Activated naive CD4-positive, alpha-beta T cell treated with anti-CD3 and anti-CD28 coated beads for 36 hours (primary cell): ENCODE measurements at regions of chr17 and their contacts with region 1.

Region 1: DNA sequence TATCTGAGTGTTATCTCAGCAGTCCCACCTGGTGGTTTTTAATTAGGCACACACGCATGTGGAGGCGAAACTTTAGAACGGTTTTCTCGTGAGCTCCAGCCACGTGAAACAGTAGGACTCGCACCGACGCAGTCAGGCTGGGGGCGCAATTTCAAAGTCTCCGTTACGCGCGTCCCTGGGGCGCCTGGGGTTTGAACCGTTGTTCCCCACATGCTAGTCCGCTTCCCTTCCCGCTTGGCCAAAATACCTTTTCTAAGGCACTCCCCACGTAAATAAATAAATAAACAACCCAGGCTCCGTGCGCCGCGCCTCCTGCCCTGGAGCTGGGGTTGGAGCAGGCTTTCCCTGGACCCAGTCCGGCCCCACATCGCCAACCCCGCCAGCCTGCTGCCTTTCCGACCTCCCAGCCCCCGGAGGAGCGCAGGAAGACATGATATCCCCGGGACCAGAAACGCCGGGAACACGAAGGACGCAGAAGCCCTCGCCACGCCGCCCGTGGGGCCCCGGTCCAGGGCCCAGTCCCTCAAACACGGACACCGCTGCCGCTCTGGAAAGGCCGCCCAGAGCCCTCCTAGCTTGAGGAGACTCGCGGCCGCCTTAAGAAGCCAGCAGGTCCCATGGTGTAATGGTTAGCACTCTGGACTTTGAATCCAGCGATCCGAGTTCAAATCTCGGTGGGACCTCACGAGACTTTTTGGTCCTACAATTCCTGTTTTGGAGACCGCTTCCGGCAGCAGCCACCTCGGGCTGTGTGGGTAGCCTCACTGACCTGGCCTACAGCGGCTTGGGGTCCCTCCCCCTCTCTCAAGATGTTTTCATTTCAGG is 18.2 kb downstream of the GNGT2 start:
- DNase-seq: peak; percentile 95
- H3K4me3 Mint-ChIP-seq: peak overlapping the region; percentile 90
- H3K27ac Mint-ChIP-seq: peak overlapping the region; percentile 98
- H3K4me1 Mint-ChIP-seq: peaks cover 20% of the 10 kb centered on the region
- H3K27me3 Mint-ChIP-seq: no peaks in the 10 kb centered on the region

Region 2: GRCh38 chr17:48429638-48430586 is 762.2 kb before region 1 on chr17 and contains the start of gene SKAP1:
- CTCF ChIA-PET with region 1: no interaction called
- intact Hi-C with region 1: loop called (anchors 10 kb)
- DNase-seq: peak; percentile 60
- H3K4me3 Mint-ChIP-seq: peak within 1 kb of the TSS; percentile 95
- H3K27ac Mint-ChIP-seq: peak within 1 kb of the TSS; percentile 96
- H3K4me1 Mint-ChIP-seq: peaks cover 65% of the 10 kb centered on the region
- H3K27me3 Mint-ChIP-seq: no peaks in the 10 kb centered on the region
- total RNA-seq, gene SKAP1: 60.3 to 60.5 TPM

Region 3: DNA sequence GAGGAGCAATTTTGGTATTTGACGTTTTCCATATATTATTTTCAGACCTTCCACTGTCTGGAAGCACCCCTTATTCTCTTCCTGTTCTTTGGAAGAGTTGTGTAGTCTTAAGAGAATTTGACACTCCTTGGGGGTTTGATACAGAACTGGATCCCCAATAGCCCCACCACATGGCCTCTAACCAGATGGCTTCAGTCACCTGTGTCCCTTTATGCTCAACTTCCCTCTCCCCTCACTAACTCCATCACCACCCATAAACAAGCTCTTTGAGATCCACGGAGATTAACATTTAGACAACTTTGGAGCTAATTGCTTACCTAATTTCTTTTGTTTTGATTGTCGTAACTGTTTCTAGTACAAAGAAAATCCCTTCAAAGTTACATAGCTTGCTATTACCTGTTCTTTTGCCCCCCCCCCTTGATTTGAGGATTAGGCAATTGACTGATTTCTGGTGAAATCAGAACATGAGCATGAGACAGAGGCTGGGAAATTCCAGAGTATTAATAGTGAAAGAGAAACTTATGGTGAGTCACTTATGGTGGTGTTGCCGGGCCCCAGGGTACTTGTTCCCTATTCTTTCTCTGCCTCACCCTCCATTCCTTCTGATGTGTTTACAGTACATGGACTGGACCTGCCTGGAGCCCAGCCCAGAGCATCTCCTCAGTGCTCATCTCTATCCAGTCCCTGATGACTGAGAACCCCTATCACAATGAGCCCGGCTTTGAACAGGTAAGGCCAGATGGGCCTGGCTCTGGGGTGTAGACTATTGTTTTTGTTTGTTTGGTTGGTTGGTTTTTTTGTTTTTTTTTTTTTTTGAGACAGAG is 276.5 kb before region 1 on chr17:
- CTCF ChIA-PET with region 1: no interaction called
- intact Hi-C with region 1: loop called (anchors 5 kb)
- DNase-seq: peak; percentile 80
- H3K4me3 Mint-ChIP-seq: peak overlapping the region; percentile 62
- H3K27ac Mint-ChIP-seq: peak overlapping the region; percentile 92
- H3K4me1 Mint-ChIP-seq: peaks cover 60% of the 10 kb centered on the region
- H3K27me3 Mint-ChIP-seq: no peaks in the 10 kb centered on the region

Region 4: GRCh38 chr17:49217651-49218413 is 25.7 kb after region 1 on chr17:
- CTCF ChIA-PET with region 1: interaction called, 14 read pairs
- intact Hi-C with region 1: loop called (anchors 2 kb)
- DNase-seq: peak; percentile 72
- H3K4me3 Mint-ChIP-seq: peak overlapping the region; percentile 33
- H3K27ac Mint-ChIP-seq: peak overlapping the region; percentile 66
- H3K4me1 Mint-ChIP-seq: peaks cover 63% of the 10 kb centered on the region
- H3K27me3 Mint-ChIP-seq: no peaks in the 10 kb centered on the region

Region 5: DNA sequence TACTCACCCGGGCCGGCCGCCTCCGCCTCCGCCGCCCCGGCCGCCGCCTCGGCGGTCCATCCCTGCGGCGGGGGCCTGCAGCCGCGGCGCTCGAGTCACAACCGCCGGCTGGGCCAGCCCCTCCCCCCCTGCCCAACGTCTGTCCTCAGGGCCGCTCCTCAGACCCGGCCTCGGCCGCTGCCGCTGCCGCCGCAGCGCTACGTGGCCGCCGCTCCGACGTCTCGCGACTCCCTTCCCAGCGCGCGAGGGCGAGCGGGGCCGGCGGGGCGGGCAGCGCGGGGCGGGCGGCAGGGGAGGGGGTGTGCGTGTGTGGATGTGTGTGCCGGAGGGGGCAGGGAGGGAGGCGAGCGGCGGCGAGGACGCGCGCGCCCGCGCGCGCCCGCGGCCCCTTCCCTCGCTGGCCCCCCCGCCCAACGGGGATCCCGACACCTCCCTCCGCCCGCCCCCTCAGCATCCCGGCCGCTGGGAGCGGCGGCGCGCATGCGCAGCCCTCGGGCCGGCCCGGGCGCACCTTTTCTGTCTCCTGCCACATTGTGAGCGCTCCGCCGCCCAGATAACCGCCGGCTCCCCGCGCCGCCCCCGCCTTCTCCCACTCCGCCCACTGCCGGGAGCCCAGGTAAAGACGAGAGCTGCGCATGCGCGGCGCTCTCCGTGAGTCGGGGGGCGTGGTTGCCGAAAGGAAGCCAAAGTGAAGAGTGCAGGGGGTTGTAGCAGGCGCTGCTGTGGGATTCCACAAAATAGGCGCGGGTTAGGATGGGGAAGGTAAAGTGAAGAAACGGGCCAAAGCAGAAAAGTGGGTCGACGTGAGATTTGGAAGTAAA is 170.0 kb after region 1 on chr17 and contains the start of gene ZNF652:
- CTCF ChIA-PET with region 1: no interaction called
- intact Hi-C with region 1: loop called (anchors 2 kb)
- DNase-seq: peak; percentile 91
- H3K4me3 Mint-ChIP-seq: peak within 1 kb of the TSS; percentile 90
- H3K27ac Mint-ChIP-seq: peak within 1 kb of the TSS; percentile 93
- H3K4me1 Mint-ChIP-seq: peaks cover 37% of the 10 kb centered on the region
- H3K27me3 Mint-ChIP-seq: no peaks in the 10 kb centered on the region
- total RNA-seq, gene ZNF652: 5.5 to 5.8 TPM

Region 6: GRCh38 chr17:49404361-49404760 is 212.2 kb after region 1 on chr17:
- CTCF ChIA-PET with region 1: no interaction called
- intact Hi-C with region 1: no loop called
- DNase-seq: no peak
- H3K4me3 Mint-ChIP-seq: no peak overlapping the region
- H3K27ac Mint-ChIP-seq: no peak overlapping the region
- H3K4me1 Mint-ChIP-seq: peaks cover 13% of the 10 kb centered on the region
- H3K27me3 Mint-ChIP-seq: no peaks in the 10 kb centered on the region